Naive thymus-derived CD8-positive, alpha-beta T cell (primary cell): ENCODE measurements at regions of chr1 and their contacts with region 1.

Region 1: GRCh38 chr1:113904674-113905434 is at the starts of genes AP4B1 and DCLRE1B:
- DNase-seq: peak; percentile 90 to 99 (median 96)
- ATAC-seq: peak; percentile 89 to 93
- H3K4me3 Mint-ChIP-seq: peak within 1 kb of the TSS; percentile 94 to 100 (median 99)
- H3K27ac Mint-ChIP-seq: peak within 1 kb of the TSS; percentile 97 to 100 (median 100)
- H3K4me1 Mint-ChIP-seq: peaks cover 28 to 67% (median 54%) of the 10 kb centered on the region in 4 donors
- H3K27me3 Mint-ChIP-seq: no peaks in the 10 kb centered on the region
- polyA plus RNA-seq, gene AP4B1: 7.9 to 9.6 (median 8.6) TPM
- polyA plus RNA-seq, gene DCLRE1B: 3.7 to 5.2 (median 4.5) TPM

Region 2: DNA sequence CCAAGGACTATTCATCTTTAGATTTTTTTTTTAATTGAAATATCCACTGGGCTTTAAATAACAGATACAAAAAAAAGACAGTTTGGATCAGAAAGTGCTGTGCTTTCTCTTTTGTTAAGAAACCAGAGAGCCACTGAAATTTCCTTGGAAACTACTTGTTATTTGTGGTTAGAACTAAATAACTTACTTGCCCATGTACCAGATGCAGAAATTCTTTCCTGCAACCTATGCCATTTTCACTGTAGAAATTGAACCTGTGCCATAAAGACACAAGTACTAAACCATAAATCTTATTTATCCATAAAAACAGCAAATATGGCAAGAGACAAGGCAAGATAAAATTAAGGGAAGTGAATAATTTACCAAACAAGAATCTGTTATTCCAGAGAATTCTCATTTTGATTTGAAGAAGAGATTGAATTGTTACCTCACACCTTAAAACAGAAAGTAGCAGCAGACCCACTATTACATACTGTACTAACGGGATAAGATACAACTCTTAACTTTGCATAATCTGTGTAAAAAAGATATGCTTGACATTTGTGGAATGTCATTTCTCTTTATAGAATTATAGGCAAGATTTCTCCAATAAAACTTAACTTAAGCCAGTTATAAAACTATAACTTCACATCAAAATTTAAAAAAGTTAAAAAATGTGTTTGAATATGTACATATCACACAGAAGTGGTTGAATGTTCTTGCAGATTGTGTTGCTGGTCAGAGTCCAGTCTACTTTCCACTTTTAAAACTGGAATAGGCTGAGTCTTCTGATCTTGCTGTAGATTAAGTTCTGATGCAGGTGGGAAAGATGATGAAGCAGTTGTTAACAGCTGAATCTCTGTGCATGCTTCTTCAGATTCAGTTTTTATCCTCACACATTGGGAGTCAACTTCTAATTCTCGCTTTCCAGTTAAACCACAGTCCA is 139.3 kb before region 1 on chr1:
- POLR2A ChIA-PET with region 1: no interaction called
- DNase-seq: no peak
- ATAC-seq: no peak
- H3K4me3 Mint-ChIP-seq: no peak overlapping the region
- H3K27ac Mint-ChIP-seq: peak overlapping the region in 6 of 10 donors; percentile 13 to 65 (median 31)
- H3K4me1 Mint-ChIP-seq: peaks cover 10 to 20% (median 18%) of the 10 kb centered on the region in 4 donors
- H3K27me3 Mint-ChIP-seq: no peaks in the 10 kb centered on the region

Region 3: DNA sequence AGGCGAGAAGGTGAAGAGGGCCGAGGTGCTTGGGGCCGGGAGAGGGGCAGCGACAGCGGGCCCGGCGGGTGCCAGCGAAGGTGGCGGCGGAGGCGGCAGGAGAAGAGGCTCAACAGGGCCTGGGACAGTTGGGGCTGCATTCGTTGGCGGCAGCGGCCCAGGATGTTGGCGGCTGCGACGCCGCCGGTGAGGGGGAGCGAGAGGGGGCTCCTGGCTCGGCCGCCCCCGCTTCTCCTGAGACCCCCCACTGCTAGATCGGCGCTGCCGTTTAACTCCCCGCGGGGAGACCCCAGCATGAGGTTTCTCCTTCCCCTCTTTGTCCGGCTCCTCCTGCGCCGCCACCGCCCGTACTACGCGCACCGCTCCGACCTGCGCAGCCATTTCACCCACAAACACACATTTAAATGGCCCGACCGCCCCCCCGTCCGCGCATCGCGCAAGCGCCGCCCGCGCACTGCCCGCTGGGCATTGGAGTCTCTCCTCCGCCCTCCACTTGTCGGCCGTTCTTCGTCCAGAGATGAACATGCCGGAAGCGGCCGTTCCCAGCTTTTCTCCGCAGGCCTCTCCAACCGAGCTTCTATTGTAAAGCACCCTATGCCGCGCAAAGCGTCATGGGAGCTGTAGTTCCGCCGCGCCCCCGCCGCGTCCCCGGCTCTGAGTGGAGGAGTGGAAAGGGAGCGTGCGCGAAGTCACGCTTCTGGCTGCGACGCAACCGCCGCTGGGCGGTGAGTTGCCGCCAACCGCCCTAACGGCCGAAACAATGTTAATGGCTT is 92.8 kb before region 1 on chr1 and contains the start of gene RSBN1:
- POLR2A ChIA-PET with region 1: interaction called, 16 read pairs
- DNase-seq: peak; percentile 91 to 99 (median 98)
- ATAC-seq: peak; percentile 91 to 93
- H3K4me3 Mint-ChIP-seq: peak within 1 kb of the TSS; percentile 92 to 99 (median 98)
- H3K27ac Mint-ChIP-seq: peak within 1 kb of the TSS; percentile 97 to 100 (median 98)
- H3K4me1 Mint-ChIP-seq: peaks cover 11 to 46% (median 32%) of the 10 kb centered on the region in 4 donors
- H3K27me3 Mint-ChIP-seq: no peaks in the 10 kb centered on the region
- polyA plus RNA-seq, gene RSBN1: 34.8 to 39.1 (median 37.5) TPM

Region 4: DNA sequence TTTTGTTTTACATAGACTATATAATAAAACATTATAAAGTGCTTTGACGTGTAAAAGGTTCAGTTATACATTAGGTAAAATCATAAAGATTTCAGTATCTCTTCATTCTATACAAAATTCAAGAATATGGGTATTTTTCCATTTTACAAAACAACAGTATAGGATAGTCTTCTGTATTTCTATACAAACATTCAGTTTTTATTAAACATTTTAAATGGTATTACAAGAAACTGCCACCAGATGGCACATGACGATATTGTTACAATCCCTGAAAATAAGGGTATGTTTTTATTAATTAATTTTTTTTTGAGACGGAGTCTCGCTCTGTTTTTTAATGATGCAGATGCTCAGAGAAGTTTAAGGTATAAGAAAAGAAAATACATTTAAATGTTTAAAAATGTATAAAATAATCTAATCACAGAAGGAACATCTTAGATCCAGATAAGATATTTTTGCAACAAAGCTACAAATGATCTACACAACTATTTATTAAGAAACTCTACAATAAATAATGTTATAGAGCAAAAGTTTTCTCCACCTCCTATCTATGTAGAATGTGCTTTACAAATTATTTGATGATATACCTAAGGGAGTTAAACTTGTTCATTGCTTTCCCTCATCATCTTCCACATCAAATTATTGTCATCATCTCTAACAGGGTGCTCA is 69.1 kb before region 1 on chr1:
- POLR2A ChIA-PET with region 1: interaction called, 13 read pairs
- DNase-seq: peak in 5 of 10 donors; percentile 21 to 70 (median 61)
- ATAC-seq: no peak
- H3K4me3 Mint-ChIP-seq: no peak overlapping the region
- H3K27ac Mint-ChIP-seq: peak overlapping the region in 3 of 10 donors; percentile 48 to 64 (median 51)
- H3K4me1 Mint-ChIP-seq: peaks cover 0 to 6% (median 1%) of the 10 kb centered on the region in 4 donors
- H3K27me3 Mint-ChIP-seq: no peaks in the 10 kb centered on the region

Region 5: DNA sequence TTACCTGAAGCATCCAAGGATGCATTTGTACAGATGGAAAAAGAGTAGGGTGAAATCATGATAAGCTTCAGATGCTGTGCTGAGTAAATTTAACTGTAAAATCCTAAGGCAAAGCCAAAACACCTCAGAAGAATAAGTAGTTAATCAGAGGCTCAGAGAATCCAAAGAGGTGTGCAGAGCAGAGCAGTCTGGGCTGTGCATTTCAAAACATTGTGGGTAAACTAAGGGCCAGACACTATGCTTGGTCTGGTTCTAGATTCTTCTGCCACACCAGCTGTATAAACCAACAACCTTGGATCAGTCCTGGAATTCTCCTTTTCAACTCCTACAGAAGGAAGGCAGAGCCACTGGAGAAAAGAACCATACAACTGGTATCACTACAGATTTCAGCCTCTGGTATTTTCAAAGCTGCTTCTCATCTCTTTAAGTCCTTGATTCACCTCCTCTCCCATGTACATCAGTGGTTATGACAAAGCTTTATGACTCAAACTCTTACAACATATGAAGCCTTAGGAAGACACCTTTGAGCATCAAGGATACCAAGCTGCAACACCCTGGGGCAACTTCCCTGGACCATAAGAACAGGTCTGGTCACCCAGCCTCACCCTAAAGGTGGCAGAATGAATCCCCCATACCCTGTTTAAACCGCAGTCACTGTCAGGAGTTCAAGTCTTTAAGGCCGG is 12.7 kb after region 1 on chr1:
- POLR2A ChIA-PET with region 1: no interaction called
- DNase-seq: no peak
- ATAC-seq: no peak
- H3K4me3 Mint-ChIP-seq: no peak overlapping the region
- H3K27ac Mint-ChIP-seq: peak overlapping the region in 1 of 10 donors; percentile 44
- H3K4me1 Mint-ChIP-seq: peaks cover 0 to 6% (median 0%) of the 10 kb centered on the region in 4 donors
- H3K27me3 Mint-ChIP-seq: peaks cover 0 to 5% (median 0%) of the 10 kb centered on the region in 5 donors

Region 6: DNA sequence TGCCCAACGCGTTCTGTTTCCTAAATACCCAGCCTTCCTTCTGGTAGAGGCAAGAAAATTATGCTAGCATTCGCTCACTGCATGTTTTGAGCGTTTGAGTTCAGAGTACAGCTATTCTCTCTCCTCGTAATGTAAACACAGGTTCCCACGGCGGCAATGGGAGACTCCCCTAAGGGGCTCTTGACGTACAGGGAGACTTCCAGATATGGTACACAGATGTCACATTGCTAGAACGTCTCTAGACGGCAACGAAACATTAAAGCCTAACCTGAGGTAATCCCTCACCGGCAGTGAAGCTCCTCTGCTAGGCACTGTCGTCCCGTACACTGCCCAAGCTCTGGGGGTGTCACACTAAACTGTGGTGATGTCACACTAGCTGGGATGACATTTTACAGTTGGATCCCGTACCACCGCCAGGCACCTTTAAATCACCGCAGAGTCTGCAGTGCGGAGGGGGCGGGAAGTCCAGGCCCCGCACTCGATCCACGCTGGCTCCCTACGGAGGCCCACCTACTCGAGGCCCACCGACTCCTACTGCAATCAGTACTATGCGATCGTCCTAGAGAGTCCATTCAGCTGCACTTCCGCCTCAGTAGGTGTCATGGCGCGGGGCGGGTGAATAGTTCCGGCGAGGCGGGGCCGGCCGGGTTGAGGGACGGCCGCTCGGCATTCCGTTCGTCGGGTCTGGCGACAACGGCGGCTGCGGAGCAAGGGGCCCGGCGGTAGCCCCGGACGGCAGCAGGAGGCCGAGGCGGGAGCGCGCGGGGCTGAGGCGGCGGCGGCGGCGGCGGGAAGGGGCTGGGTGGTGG is 24.3 kb after region 1 on chr1 and contains the start of gene HIPK1:
- POLR2A ChIA-PET with region 1: interaction called, 145 read pairs
- DNase-seq: peak; percentile 84 to 96 (median 92)
- ATAC-seq: peak; percentile 45 to 67
- H3K4me3 Mint-ChIP-seq: peak within 1 kb of the TSS; percentile 82 to 100 (median 98)
- H3K27ac Mint-ChIP-seq: peak within 1 kb of the TSS; percentile 98 to 100 (median 100)
- H3K4me1 Mint-ChIP-seq: peaks cover 39 to 57% (median 53%) of the 10 kb centered on the region in 4 donors
- H3K27me3 Mint-ChIP-seq: peaks cover 0 to 4% (median 0%) of the 10 kb centered on the region in 5 donors
- polyA plus RNA-seq, gene HIPK1: 14.5 to 19.3 (median 17.5) TPM

Region 7: DNA sequence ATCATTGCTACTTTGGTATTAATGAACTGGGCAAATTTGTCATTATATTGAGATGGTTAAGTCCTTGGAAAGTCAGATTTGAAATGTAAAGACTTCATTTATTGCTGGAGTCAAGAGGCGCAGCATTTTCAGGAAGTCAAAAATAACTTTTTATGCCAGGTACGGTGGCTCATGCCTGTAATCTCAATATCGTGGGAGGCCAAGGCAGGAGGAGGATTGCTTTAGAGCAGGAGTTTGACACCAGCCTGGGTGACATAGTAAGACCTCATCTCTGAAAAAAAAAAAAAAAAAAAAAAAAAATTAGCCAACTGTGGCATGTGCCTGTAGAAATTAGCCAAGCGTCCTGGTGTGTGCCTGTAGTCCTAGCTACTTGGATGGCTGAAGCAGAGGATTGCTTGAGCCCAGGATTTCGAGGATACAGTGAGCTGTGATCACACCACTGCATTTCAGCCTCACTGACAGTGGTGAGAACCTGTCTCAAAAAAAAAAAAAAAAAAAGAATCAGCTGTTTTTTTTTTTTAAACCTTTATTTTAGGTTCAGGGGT is 29.7 kb after region 1 on chr1:
- POLR2A ChIA-PET with region 1: interaction called, 145 read pairs
- DNase-seq: no peak
- ATAC-seq: no peak
- H3K4me3 Mint-ChIP-seq: peak overlapping the region; percentile 17 to 98 (median 96)
- H3K27ac Mint-ChIP-seq: peak overlapping the region; percentile 97 to 100 (median 99)
- H3K4me1 Mint-ChIP-seq: peaks cover 50 to 95% (median 80%) of the 10 kb centered on the region in 4 donors
- H3K27me3 Mint-ChIP-seq: no peaks in the 10 kb centered on the region

Region 8: GRCh38 chr1:113940365-113941244 is 35.8 kb after region 1 on chr1:
- POLR2A ChIA-PET with region 1: interaction called, 19 read pairs
- DNase-seq: peak in 9 of 10 donors; percentile 13 to 68 (median 62)
- ATAC-seq: peak; percentile 70 to 74
- H3K4me3 Mint-ChIP-seq: peak overlapping the region; percentile 74 to 92 (median 84)
- H3K27ac Mint-ChIP-seq: peak overlapping the region; percentile 91 to 98 (median 96)
- H3K4me1 Mint-ChIP-seq: peaks cover 43 to 86% (median 77%) of the 10 kb centered on the region in 4 donors
- H3K27me3 Mint-ChIP-seq: no peaks in the 10 kb centered on the region

Region 9: DNA sequence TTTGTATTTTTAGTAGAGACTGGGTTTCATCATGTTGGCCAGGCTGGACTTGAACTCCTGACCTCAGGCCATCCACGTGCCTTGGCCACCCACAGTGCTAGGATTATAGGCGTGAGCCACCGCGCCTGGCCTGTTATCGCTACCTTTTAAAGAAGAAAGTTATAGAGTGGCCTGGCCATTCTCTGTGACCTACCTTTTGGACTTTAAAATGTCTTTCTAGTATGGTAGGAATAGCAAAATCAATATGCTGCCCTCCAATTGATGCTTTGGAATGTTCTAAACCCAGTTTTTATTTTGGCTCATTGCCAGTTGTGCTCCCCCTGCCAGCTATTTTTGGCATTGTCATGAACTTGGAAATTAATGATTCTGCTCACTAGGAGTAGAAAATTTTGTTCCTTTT is 44.2 kb after region 1 on chr1:
- POLR2A ChIA-PET with region 1: interaction called, 19 read pairs
- DNase-seq: peak in 5 of 10 donors; percentile 32 to 48 (median 40)
- ATAC-seq: no peak
- H3K4me3 Mint-ChIP-seq: peak overlapping the region; percentile 30 to 90 (median 70)
- H3K27ac Mint-ChIP-seq: peak overlapping the region; percentile 89 to 97 (median 95)
- H3K4me1 Mint-ChIP-seq: peaks cover 19 to 93% (median 81%) of the 10 kb centered on the region in 4 donors
- H3K27me3 Mint-ChIP-seq: no peaks in the 10 kb centered on the region